ENCODE measurements at regions of chr5 and their contacts with region 1.

Region 1: DNA sequence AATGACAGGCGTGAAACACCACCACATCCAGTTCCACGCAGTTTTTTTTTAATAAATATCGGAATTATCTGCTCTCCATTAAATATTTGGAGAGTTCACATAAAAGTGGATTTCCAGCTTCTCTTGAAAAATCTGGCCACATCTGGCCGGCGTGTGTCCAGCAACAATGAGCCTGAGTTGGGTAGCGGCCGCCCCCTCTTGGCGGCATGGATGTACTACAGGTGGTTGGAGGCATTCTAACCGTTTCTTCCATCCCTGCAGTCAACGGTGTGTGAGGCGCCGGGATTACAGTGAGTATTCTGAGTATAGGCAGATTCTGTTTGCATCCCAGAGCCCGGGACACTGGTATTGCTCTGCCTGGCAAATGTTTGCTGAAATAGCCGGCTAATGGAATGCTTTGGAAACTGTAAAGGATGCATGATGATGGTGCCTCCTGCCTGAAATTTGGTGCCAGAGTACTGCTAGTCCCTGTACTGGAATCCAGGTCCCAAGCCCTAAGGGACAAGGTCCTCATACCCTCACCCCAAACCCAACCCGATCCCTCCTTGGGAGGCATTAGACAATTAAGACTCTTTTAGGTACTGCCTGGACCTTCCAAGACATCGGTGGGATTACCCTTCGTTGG is 13.6 kb upstream of the GM2A start:
- DNase-seq: peak; percentile 72
- ATAC-seq: peak; percentile 70
- H3K4me3 Mint-ChIP-seq: no peak overlapping the region
- H3K27ac Mint-ChIP-seq: no peak overlapping the region
- H3K4me1 Mint-ChIP-seq: peaks cover 46% of the 10 kb centered on the region
- H3K27me3 Mint-ChIP-seq: no peaks in the 10 kb centered on the region

Region 2: GRCh38 chr5:151150471-151151262 is 88.7 kb before region 1 on chr5:
- CTCF ChIA-PET with region 1: interaction called, 20 read pairs
- POLR2A ChIA-PET with region 1: no interaction called
- DNase-seq: peak; percentile 86
- ATAC-seq: peak; percentile 84
- H3K4me3 Mint-ChIP-seq: peak overlapping the region; percentile 64
- H3K27ac Mint-ChIP-seq: peak overlapping the region; percentile 92
- H3K4me1 Mint-ChIP-seq: peaks cover 93% of the 10 kb centered on the region
- H3K27me3 Mint-ChIP-seq: no peaks in the 10 kb centered on the region

Region 3: DNA sequence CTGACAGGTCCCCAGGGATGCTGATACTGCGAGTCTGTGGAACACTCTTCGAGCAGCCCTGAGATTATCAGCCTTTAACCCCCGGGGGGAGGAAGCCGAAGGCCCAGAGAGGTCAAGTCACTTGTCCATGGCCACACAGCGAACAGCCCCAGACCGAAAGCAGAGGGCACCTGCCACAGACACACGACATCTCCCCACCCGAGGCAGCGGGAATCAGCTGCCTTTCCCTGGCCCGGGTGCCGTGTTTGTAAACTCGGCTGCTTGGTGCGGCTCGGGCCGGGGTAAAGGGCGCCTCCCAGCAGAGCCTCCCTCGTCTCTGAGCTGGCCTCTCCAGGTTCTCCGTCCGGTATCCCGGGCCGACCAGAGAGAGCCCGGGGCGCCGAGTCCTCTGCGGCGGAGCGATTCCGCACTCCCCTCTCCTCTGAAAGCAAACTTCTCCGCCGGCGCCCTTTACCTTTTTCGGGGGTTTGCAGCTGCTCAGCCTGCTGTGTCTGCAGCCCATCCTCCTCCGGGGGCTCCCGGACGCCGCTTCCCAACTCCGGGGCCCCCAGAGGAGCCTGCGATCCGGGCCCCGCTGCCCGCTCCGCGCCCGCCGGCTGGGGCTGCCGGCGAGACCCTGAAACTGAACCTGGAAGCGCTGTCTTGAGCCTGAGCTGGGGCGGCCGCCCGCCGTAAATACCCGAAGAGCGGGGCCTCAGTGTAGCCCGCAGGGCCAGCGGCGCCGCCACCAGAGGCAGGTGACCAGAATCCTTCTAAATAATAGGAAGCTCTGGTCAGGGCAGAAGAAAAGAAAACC is 15.7 kb before region 1 on chr5 and contains the start of gene CCDC69:
- CTCF ChIA-PET with region 1: interaction called, 133 read pairs
- POLR2A ChIA-PET with region 1: interaction called, 12 read pairs
- DNase-seq: peak; percentile 71
- ATAC-seq: peak; percentile 77
- H3K4me3 Mint-ChIP-seq: peak within 1 kb of the TSS; percentile 85
- H3K27ac Mint-ChIP-seq: peak within 1 kb of the TSS; percentile 91
- H3K4me1 Mint-ChIP-seq: peaks cover 55% of the 10 kb centered on the region
- H3K27me3 Mint-ChIP-seq: no peaks in the 10 kb centered on the region
- total RNA-seq, gene CCDC69: 87.6 to 92.7 TPM

Region 4: DNA sequence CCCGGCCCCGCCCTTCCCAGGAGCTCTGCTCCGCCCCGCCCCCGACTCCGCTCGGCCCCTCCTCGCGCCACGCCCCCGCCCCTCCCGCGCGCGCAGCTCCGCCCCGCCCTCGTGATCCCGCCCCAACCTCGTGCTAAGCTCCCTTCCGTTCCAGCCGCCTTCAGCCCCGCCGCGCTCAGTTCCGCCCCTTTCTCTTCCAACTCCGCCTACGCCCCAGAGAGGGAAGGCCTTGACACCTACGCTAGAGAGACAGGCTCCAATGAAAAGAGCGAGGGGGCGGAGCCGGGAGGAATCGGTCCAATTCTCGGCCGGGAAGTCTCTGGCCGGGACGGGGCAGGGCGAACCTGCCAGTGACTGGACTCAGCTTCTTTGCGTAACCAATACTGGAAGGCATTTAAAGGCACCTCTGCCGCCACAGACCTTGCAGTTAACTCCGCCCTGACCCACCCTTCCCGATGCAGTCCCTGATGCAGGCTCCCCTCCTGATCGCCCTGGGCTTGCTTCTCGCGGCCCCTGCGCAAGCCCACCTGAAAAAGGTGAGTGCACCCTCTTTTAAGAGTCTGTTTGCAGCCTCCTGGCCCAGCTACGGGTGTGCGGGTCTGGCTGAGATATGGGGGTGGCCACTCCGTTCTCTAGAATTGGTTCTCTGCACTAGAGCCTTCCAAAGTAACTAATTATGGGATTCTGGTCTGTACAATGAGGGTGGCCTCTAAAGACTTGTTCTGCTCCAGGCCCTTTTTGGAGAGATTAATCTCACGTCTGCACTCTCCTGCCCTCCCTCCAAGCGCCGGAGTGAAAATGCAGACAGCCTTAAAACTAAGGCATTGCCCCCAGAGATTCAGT is 13.6 kb after region 1 on chr5 and contains the start of gene GM2A:
- CTCF ChIA-PET with region 1: interaction called, 23 read pairs
- POLR2A ChIA-PET with region 1: interaction called, 4 read pairs
- DNase-seq: peak; percentile 99
- ATAC-seq: peak; percentile 98
- H3K4me3 Mint-ChIP-seq: peak within 1 kb of the TSS; percentile 88
- H3K27ac Mint-ChIP-seq: peak within 1 kb of the TSS; percentile 93
- H3K4me1 Mint-ChIP-seq: peaks cover 39% of the 10 kb centered on the region
- H3K27me3 Mint-ChIP-seq: no peaks in the 10 kb centered on the region
- total RNA-seq, gene GM2A: 19.5 to 19.6 TPM

Region 5: GRCh38 chr5:151447174-151448037 is 208.1 kb after region 1 on chr5 and contains the start of gene SLC36A1:
- CTCF ChIA-PET with region 1: no interaction called
- POLR2A ChIA-PET with region 1: no interaction called
- DNase-seq: peak; percentile 95
- ATAC-seq: peak; percentile 94
- H3K4me3 Mint-ChIP-seq: peak within 1 kb of the TSS; percentile 94
- H3K27ac Mint-ChIP-seq: peak within 1 kb of the TSS; percentile 90
- H3K4me1 Mint-ChIP-seq: peaks cover 20% of the 10 kb centered on the region
- H3K27me3 Mint-ChIP-seq: peaks cover 29% of the 10 kb centered on the region
- total RNA-seq, gene SLC36A1: 6.6 to 7.7 TPM

Measured in activated CD8-positive, alpha-beta T cell treated with anti-CD3 and anti-CD28 coated beads, Interleukin-2, amount 10 ng/mL, durations not matched to agents 7 days and 5 days (primary cell).